ENCODE measurements at regions of chr6 and their contacts with region 1.

Region 1: DNA sequence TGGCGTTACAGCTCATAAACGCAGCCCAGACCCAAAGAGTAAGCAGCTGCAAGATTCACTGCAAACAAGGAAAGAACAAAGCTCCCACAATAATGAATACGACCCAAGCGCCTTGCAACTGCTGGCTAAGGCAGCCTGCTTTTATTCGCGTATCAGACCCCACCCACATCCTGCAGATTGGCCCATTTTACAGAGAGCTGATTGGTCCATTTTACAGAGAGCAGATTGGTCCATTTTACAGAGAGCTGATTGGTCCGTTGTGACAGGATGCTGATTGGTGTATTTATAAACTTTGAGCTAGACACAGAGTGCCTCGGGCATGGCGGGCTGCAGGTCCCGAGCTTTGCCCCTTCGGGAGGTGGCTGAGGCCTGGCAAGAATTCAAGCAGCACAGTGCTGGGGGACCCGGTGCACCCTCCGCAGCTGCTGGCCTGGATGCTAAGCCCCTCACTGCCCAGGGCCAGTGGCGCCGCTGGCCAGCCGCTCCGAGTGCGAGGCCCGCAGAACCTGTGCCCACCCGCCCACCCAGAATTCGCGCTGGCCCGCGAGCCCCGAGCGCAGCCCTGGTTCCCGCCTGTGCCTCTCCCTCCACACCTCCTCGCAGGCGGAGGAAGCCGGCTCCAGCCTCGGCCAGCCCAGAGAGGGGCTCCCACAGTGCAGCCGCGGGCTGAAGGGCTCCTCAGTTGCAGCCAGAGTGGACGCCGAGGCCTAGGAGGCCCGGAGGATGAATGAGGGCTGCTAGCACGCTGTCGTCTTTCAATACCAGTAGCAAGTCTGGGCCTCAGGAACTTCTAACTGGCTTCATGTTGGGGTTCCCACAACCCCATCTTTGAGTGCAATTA is 11.2 kb upstream of the RPS10 start:
- H3K4me3 ChIP-seq: no peak overlapping the region
- H3K27ac ChIP-seq: no peak overlapping the region
- H3K4me1 ChIP-seq: no peaks in the 10 kb centered on the region
- CTCF ChIP-seq: no peak

Region 2: DNA sequence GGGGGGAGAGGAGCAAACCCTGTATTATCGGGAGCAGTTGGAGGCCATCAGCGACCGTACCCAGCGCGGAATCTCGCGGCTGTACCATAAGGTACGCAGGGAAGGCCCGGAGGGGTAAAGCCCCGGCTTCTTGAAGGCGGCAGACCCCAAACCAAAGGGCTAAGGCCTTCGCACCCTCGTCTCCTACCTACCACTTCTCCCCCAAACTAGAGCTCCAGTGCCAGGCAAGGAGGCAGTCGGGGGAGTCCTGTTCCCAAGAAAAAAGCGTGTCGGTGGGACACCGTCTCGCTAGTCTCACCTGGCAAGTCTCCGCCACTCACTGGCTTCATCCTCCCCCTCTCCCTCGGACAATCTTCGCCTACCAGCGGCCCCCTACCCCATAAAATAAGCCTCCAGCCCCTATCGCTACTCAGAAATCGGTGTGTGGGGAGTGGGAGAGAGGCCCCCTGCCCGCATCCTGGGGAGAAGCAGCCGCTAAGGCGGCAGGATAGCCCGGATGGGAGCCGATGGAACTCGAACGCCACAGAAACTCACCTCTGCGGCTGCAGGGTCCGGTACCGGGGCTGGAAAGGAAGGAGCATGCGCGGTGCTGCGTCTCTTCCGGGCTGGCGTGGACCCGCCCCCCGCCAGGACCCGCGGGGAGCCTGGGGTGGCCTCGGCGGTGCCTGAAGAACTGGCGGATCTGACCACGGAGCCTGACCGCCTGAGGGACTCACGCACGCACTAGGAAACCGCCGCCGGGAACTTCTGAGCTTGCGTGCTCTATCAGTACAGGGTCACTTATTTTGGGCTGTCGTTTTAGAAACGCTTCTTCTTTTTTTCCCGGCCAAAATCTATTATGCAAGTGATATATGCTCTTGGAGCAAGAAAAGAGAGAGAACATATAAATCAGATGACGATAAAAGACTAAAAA is 11.3 kb before region 1 on chr6 and contains the start of gene RPS10:
- CTCF ChIA-PET with region 1: interaction called, 5 read pairs
- POLR2A ChIA-PET with region 1: interaction called, 11 read pairs
- H3K4me3 ChIP-seq: peak within 1 kb of the TSS; percentile 58
- H3K27ac ChIP-seq: peak within 1 kb of the TSS; percentile 97
- H3K4me1 ChIP-seq: peaks cover 2% of the 10 kb centered on the region; the same call in 1 of the 2 replicates
- CTCF ChIP-seq: no peak

Measured in HEK293 (cell line).